HCT116 (cell line): ENCODE measurements at regions of chr14 and their contacts with region 1.

Region 1: GRCh38 chr14:55579724-55580469 is at the start of gene KTN1:
- DNase-seq: peak; percentile 48
- ATAC-seq: peak; percentile 88
- H3K4me3 ChIP-seq: peak within 1 kb of the TSS; percentile 80 to 89
- H3K27ac ChIP-seq: peak within 1 kb of the TSS; percentile 87
- H3K4me1 ChIP-seq: peaks cover 28 to 43% of the 10 kb centered on the region in 2 experiments
- H3K27me3 ChIP-seq: no peaks in the 10 kb centered on the region
- CTCF ChIP-seq: no peak
- POLR2A ChIP-seq: no peak
- RAD21 ChIP-seq: no peak
- total RNA-seq, gene KTN1: 105 TPM

Region 2: GRCh38 chr14:55802986-55803872 is 223.3 kb after region 1 on chr14:
- CTCF ChIA-PET with region 1: no interaction called
- POLR2A ChIA-PET with region 1: no interaction called
- RAD21 ChIA-PET with region 1: no interaction called
- intact Hi-C with region 1: loop called (anchors 5 kb)
- DNase-seq: peak; percentile 91
- ATAC-seq: peak; percentile 77
- H3K4me3 ChIP-seq: peak overlapping the region; percentile 15 to 29
- H3K27ac ChIP-seq: peak overlapping the region; percentile 91
- H3K4me1 ChIP-seq: peaks cover 58 to 77% of the 10 kb centered on the region in 2 experiments
- H3K27me3 ChIP-seq: no peaks in the 10 kb centered on the region
- CTCF ChIP-seq: peak; percentile 25 to 49 (median 41); a peak in 5 of 6 replicates
- POLR2A ChIP-seq: peak; percentile 36
- RAD21 ChIP-seq: peak; percentile 56